Thyroid gland (tissue), 4 donors: ENCODE measurements at regions of chr10 and their contacts with region 1.

Region 1: GRCh38 chr10:127906548-127907377 is at the start of gene PTPRE:
- DNase-seq: peak; percentile 52 to 53
- H3K4me3 ChIP-seq: peak within 1 kb of the TSS in 1 of 3 donors; percentile 44
- H3K27ac ChIP-seq: peak within 1 kb of the TSS in 2 of 3 donors; percentile 70 to 72
- H3K4me1 ChIP-seq: peaks cover 3 to 9% of the 10 kb centered on the region in 2 donors
- H3K27me3 ChIP-seq: no peaks in the 10 kb centered on the region
- CTCF ChIP-seq: peak; percentile 12 to 95 (median 54)
- POLR2A ChIP-seq: no peak
- total RNA-seq, gene PTPRE: 16.8 to 25.0 (median 19.4) TPM

Region 2: DNA sequence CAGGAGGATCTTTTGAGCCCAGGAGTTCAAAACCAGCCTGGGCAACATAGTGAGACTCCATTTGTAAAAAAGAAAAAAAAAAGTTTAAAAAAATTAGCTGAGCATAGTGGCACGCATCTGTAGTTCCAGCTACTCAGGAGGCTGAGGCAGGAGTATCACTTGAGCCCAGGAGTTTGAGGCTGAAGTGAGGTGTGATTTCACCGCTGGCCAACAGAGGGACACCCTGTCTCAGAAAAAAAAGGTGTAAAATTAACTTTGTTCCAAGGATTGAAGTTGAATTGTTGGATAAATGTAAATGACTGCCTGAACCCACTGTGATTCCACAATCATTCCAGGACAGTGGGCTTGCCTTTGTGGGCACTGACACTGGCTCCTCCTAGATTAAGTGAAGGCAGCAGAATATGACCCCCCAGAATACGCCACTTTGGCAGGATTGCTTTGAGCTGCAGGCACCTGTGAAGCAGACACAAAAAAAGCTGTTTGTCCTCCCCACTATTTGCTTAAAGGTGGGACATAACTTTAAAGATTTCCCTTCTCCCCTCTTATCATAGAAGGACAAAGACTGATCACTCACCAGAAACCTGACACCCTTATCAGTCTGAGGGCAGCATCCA is 227.0 kb before region 1 on chr10:
- intact Hi-C with region 1: no loop called
- DNase-seq: no peak
- H3K4me3 ChIP-seq: no peak overlapping the region
- H3K27ac ChIP-seq: no peak overlapping the region
- H3K4me1 ChIP-seq: peaks cover 0 to 7% of the 10 kb centered on the region in 2 donors
- H3K27me3 ChIP-seq: no peaks in the 10 kb centered on the region
- CTCF ChIP-seq: peak in 1 of 6 experiments; percentile 11
- POLR2A ChIP-seq: no peak

Region 3: DNA sequence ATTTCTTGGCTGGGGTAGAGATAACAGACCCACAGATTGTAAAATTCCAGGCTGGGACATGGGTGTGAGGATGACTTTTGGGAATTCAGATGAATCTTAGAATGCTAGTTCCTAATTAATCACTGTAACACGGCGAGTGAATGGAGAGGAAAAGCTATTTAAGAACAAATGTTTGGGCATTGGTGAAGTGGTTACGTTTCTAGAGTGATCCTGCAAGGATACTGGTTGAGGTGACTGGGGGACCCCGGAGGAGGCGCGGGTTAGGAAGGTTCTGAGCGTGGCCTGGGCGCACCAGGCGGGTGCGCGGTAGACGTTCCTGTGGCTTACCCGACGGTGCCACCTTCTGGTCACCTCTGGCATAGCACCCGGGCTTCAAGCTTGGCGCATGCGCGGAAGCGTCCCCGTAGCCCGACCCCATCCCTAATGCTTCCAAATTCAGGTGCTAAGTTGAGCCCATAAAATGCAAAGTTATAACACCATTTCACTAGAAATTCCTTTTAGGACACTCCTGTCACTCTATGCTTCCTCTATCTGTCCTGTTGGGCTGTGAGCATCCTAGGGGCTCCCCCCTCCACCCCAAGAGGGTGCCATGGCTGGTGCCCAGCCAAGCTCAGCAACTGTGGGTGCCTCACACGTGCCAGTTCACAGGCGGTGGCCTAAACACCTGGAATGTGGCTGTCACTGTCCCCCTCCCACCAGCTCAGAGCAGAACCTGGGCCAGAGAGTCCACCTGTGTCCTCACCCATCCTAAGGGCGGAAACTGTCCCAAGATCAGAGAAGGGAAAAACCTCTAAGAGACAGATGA is 104.6 kb after region 1 on chr10:
- intact Hi-C with region 1: loop called (anchors 1 kb)
- DNase-seq: peak; percentile 70 to 78
- H3K4me3 ChIP-seq: no peak overlapping the region
- H3K27ac ChIP-seq: no peak overlapping the region
- H3K4me1 ChIP-seq: peaks cover 0 to 4% of the 10 kb centered on the region in 2 donors
- H3K27me3 ChIP-seq: no peaks in the 10 kb centered on the region
- CTCF ChIP-seq: peak; percentile 78 to 97 (median 96)
- POLR2A ChIP-seq: no peak

Region 4: GRCh38 chr10:128022261-128023196 is 115.8 kb after region 1 on chr10:
- intact Hi-C with region 1: no loop called
- DNase-seq: no peak
- H3K4me3 ChIP-seq: no peak overlapping the region
- H3K27ac ChIP-seq: no peak overlapping the region
- H3K4me1 ChIP-seq: no peaks in the 10 kb centered on the region
- H3K27me3 ChIP-seq: no peaks in the 10 kb centered on the region
- CTCF ChIP-seq: no peak
- POLR2A ChIP-seq: no peak